Left cardiac atrium (tissue), 4 donors: ENCODE measurements at regions of chr10 and their contacts with region 1.

Region 1: DNA sequence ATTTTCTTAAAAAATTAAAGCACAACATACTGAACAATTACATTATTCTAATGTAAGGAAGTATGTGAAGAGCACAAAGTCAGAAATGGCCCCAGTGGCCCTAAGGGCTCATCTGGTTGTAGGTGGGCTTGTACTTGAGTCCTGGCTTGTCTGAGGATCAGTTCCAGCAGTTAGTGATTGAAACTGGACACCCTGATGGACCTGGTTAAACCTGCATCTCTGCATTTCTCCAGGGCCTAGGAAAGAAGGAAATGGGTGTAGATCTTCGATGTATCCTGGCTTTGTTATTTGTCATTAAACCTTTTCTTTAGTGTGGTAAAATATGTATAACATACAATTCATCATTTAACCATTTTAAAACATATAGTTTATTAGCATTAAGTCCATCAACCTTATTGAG is 9.7 kb upstream of the AKR1C2 start:
- DNase-seq: no peak
- ATAC-seq: no peak

Region 2: DNA sequence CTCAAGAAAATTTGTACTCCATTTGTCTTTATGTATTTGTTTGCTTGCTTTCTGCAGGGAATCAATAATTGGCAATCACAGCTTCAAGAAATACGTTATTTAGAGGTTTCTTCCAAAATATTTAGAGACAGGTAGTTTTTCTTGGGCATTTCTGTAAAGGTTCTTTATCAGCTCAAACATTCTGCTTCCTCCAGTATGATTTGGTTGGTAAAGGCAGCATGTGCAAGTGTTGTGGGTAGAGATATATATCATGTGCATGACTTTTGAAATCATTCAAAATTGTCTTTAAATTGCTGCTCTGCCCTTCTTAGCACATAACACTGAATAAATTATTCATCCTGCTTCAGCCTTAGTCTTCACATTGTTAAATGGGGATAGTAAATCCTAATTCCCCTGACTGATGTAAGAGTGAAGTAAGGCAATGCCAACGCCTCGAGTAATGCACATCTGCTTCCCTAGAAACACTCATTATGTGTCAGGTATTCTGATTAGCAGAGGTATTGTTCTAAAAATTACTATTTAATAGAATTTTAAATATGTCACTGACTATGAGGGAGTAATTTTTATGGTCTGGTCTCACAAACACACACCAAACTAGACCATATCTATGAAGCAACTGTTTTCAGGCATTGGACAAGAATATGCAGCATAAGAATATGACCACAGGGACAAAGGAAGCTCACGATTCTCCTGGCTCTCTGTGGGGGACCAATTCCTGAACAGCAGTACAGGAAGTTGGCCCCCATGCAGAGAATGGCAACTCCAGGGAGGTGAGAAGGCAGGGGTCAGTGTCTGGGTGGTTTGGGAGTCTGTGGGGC is 264.7 kb before region 1 on chr10:
- intact Hi-C with region 1: no loop called
- DNase-seq: no peak
- ATAC-seq: no peak

Region 3: GRCh38 chr10:4849555-4850242 is 163.7 kb before region 1 on chr10:
- intact Hi-C with region 1: no loop called
- DNase-seq: peak; percentile 92
- ATAC-seq: peak; percentile 88 to 92

Region 4: DNA sequence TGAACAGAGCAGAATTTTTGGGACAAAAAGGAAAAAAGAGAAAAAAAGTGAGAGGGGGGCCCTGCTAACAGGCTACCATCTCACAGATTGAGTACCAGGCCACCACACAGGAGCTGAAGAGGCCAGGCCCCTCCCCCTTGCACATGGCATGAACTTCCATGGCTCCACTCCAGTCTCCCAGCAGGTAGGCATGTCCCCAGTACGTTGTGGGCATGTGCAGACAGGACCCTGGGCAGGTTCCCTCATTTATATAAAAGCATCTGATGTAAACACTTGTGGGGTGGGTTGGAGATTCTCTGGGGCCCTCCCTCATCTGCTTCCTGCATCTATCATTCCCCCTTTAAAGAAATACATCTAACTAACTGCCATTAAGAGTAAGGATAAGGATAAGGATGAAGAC is 95.1 kb before region 1 on chr10:
- intact Hi-C with region 1: no loop called
- DNase-seq: no peak
- ATAC-seq: no peak

Region 5: GRCh38 chr10:4953405-4953804 is 60.0 kb before region 1 on chr10:
- intact Hi-C with region 1: loop called in 1 of 2 experiments (anchors 5 kb)
- DNase-seq: no peak
- ATAC-seq: no peak